Activated CD4-positive, alpha-beta T cell treated with anti-CD3 and anti-CD28 coated beads for 36 hours (primary cell): ENCODE measurements at regions of chr1 and their contacts with region 1.

Region 1: GRCh38 chr1:44807262-44808062 is at the start of gene DYNLT4:
- DNase-seq: peak; percentile 94
- ATAC-seq: peak; percentile 57
- H3K4me3 Mint-ChIP-seq: peak within 1 kb of the TSS; percentile 87
- H3K27ac Mint-ChIP-seq: peak within 1 kb of the TSS; percentile 99
- H3K4me1 Mint-ChIP-seq: peaks cover 92% of the 10 kb centered on the region
- H3K27me3 Mint-ChIP-seq: no peaks in the 10 kb centered on the region
- total RNA-seq, gene DYNLT4: 0.32 TPM in 1 of 2 experiments, not detected in the other

Region 2: GRCh38 chr1:44631647-44632539 is 175.6 kb before region 1 on chr1:
- CTCF ChIA-PET with region 1: no interaction called
- POLR2A ChIA-PET with region 1: no interaction called
- intact Hi-C with region 1: loop called in 1 of 2 experiments (anchors 5 kb)
- DNase-seq: peak; percentile 95
- ATAC-seq: peak; percentile 81
- H3K4me3 Mint-ChIP-seq: peak overlapping the region; percentile 86
- H3K27ac Mint-ChIP-seq: peak overlapping the region; percentile 97
- H3K4me1 Mint-ChIP-seq: peaks cover 40% of the 10 kb centered on the region
- H3K27me3 Mint-ChIP-seq: no peaks in the 10 kb centered on the region

Region 3: GRCh38 chr1:44775078-44775929 is 32.2 kb before region 1 on chr1 and contains the start of gene RPS8:
- CTCF ChIA-PET with region 1: interaction called, 4 read pairs
- POLR2A ChIA-PET with region 1: interaction called, 26 read pairs
- intact Hi-C with region 1: loop called in 1 of 2 experiments (anchors 2 kb)
- DNase-seq: peak; percentile 94
- ATAC-seq: peak; percentile 84
- H3K4me3 Mint-ChIP-seq: peak within 1 kb of the TSS; percentile 96
- H3K27ac Mint-ChIP-seq: peak within 1 kb of the TSS; percentile 100
- H3K4me1 Mint-ChIP-seq: peaks cover 33% of the 10 kb centered on the region
- H3K27me3 Mint-ChIP-seq: no peaks in the 10 kb centered on the region
- total RNA-seq, gene RPS8: 3,005 to 3,275 TPM

Region 4: DNA sequence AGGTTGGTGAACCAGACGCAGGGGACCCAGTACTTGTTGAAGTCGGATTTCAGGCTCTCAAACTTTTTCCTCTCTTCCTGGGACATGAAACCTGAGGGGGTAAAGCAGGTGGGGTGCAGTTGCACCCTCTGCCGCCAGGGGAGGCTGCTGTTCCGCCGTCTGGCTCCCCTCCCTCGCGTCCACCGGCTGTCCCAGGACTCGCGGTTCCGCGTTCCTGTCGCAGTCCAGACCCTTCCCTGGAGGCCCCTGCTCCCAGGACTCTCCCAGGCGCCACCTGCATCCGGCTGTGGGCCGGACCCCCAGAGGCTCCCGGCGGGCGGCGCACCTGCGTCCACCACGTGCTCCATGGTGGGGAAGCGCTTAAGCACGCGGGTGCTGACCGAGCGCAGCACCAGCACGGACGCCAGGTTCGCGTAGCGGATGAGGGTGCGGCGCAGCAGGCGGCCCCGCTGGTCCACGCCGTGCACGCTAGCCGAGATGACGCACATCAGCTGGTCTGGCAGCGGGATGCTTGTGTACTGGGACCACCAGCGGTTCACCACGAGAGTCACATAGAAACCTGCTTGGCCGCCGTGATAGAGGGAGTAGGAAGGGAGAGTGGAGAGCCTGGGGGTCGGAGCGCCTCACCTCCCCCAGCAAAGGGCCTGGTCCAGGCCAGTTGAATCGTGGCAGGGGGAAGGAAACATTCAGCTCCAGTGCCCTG is 21.2 kb before region 1 on chr1:
- CTCF ChIA-PET with region 1: interaction called, 12 read pairs
- POLR2A ChIA-PET with region 1: interaction called, 11 read pairs
- intact Hi-C with region 1: no loop called
- DNase-seq: peak; percentile 85
- ATAC-seq: peak; percentile 73
- H3K4me3 Mint-ChIP-seq: peak overlapping the region; percentile 66
- H3K27ac Mint-ChIP-seq: peak overlapping the region; percentile 69
- H3K4me1 Mint-ChIP-seq: peaks cover 31% of the 10 kb centered on the region
- H3K27me3 Mint-ChIP-seq: no peaks in the 10 kb centered on the region

Region 5: GRCh38 chr1:44819608-44820327 is 12.3 kb after region 1 on chr1:
- CTCF ChIA-PET with region 1: interaction called, 41 read pairs
- POLR2A ChIA-PET with region 1: interaction called, 337 read pairs
- intact Hi-C with region 1: loop called (anchors 1 kb)
- DNase-seq: peak; percentile 88
- ATAC-seq: peak; percentile 88
- H3K4me3 Mint-ChIP-seq: peak overlapping the region; percentile 85
- H3K27ac Mint-ChIP-seq: peak overlapping the region; percentile 100
- H3K4me1 Mint-ChIP-seq: peaks cover 37% of the 10 kb centered on the region
- H3K27me3 Mint-ChIP-seq: no peaks in the 10 kb centered on the region

Region 6: DNA sequence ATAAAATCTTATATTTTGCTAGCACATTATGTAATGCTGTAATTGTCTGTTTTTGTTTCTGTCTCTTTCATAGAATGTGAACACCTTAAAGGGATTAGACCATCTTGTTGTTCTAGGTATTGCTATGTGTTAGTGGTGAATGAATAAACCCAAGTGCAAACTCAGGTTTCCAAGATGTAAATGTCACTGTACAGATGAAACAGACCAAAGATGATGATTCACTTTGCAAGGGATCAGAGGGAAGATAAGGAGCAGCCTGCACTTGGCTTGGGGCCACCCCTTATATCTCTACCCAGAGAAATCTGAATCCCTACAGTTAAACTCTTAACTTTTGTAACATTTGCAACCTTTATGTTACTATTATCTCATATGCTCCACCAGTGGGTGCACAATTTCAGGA is 230.0 kb after region 1 on chr1:
- CTCF ChIA-PET with region 1: no interaction called
- POLR2A ChIA-PET with region 1: no interaction called
- intact Hi-C with region 1: no loop called
- DNase-seq: peak; percentile 26
- ATAC-seq: peak; percentile 92
- H3K4me3 Mint-ChIP-seq: no peak overlapping the region
- H3K27ac Mint-ChIP-seq: no peak overlapping the region
- H3K4me1 Mint-ChIP-seq: peaks cover 7% of the 10 kb centered on the region
- H3K27me3 Mint-ChIP-seq: no peaks in the 10 kb centered on the region